HepG2 (cell line): ENCODE measurements at regions of chr6 and their contacts with region 1.

Region 1: GRCh38 chr6:110179401-110180227 is at the start of gene WASF1:
- DNase-seq: peak; percentile 96
- ATAC-seq: peak; percentile 85
- H3K4me3 ChIP-seq: peak within 1 kb of the TSS; percentile 83 to 95 (median 94)
- H3K27ac ChIP-seq: peak within 1 kb of the TSS; percentile 86
- H3K4me1 ChIP-seq: peaks cover 44% of the 10 kb centered on the region
- H3K27me3 ChIP-seq: peaks cover 0 to 3% of the 10 kb centered on the region in 2 experiments; a peak in 1 of 5 replicates
- CTCF ChIP-seq: 0 out of 2 replicates have a peak, but pooled peaks have one; percentile 21
- EP300 ChIP-seq: no peak
- POLR2A ChIP-seq: peak in 1 of 2 experiments; percentile 86; a peak in 2 of 4 replicates
- RAD21 ChIP-seq: 0 out of 2 replicates have a peak, but pooled peaks have one; percentile 8
- total RNA-seq, gene WASF1: 8.5 and 10.3 TPM in 2 replicates

Region 2: DNA sequence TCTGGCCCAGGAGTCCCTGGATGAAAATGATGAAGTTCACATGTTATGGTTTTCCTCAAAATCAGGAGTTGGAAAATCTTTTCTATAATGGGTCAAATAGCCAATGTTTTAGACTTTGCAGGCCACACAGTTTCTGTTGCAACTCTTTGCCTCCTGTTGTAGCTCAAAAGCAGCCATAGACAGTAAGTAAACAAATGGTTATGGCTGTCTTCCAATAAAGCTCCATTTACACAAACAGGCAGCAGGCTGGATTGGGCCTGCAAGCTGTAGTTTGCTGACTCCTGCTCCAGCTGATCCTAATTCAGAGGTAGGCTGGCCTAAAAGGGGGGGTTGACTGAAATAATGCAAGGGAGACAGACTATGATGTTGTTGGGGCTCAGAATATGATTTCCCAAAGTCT is 145.6 kb after region 1 on chr6:
- CTCF ChIA-PET with region 1: no interaction called
- POLR2A ChIA-PET with region 1: no interaction called
- in situ Hi-C with region 1: no loop called
- intact Hi-C with region 1: loop called (anchors 5 kb)
- DNase-seq: peak; percentile 46
- ATAC-seq: peak; percentile 34; the same call in 2 of the 3 replicates
- H3K4me3 ChIP-seq: no peak overlapping the region
- H3K27ac ChIP-seq: no peak overlapping the region
- H3K4me1 ChIP-seq: peaks cover 43% of the 10 kb centered on the region
- H3K27me3 ChIP-seq: peaks cover 0 to 18% of the 10 kb centered on the region in 2 experiments; a peak in 2 of 5 replicates
- CTCF ChIP-seq: no peak
- EP300 ChIP-seq: no peak
- POLR2A ChIP-seq: no peak
- RAD21 ChIP-seq: no peak

Region 3: DNA sequence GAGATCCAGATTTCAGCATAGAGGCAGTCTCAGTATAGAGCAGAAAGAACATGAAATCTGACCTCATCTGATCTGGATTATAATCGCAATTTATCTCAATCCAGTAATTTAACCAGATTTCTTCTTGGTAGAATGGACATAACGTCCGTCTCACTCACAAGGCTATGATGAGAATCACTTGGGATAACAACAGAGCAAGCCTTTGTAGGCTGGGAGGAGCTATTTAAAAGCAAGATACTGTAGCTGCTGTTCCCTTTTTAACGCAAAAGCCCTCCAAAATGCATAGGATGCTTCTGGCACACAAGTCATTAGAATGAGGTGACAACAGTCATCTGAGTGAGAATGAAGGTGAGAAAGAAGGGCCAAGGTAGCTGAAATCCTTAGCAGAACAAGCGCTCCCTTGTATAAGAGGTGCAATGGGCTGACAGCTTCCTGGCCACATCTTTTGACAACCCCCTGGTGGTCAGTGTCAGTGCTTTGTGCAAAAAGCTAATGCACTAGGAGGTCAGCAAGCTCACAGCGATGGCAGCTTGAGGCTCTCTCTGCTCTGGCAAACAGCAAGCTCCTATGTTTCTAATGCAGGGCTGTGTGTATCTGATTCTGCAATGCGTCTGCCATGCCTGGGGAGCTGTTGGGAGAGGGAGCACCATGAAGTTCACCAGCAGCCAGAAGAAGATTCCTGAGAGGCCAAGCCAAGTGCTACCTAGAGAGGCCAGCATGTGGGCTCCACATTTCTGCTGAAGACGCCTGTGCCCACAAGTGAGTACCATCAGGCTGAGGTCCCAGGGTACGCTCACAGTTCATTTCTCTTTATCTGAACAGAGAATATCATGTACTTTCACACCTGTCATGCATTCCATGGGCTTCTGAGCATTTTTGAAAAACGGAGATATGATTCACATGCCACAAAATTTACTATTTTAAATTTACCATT is 162.3 kb after region 1 on chr6:
- CTCF ChIA-PET with region 1: interaction called, 4 read pairs
- POLR2A ChIA-PET with region 1: no interaction called
- in situ Hi-C with region 1: no loop called
- intact Hi-C with region 1: loop called (anchors 5 kb)
- DNase-seq: peak; percentile 55
- ATAC-seq: peak; percentile 100
- H3K4me3 ChIP-seq: no peak overlapping the region
- H3K27ac ChIP-seq: no peak overlapping the region
- H3K4me1 ChIP-seq: no peaks in the 10 kb centered on the region
- H3K27me3 ChIP-seq: no peaks in the 10 kb centered on the region
- CTCF ChIP-seq: peak; percentile 82
- EP300 ChIP-seq: no peak
- POLR2A ChIP-seq: no peak
- RAD21 ChIP-seq: peak; percentile 60

Region 4: GRCh38 chr6:110389689-110390382 is 210.2 kb after region 1 on chr6:
- CTCF ChIA-PET with region 1: interaction called, 11 read pairs
- POLR2A ChIA-PET with region 1: interaction called, 3 read pairs
- in situ Hi-C with region 1: loop called (anchors 10 kb)
- intact Hi-C with region 1: loop called (anchors 1 kb)
- DNase-seq: no peak
- ATAC-seq: no peak
- H3K4me3 ChIP-seq: no peak overlapping the region
- H3K27ac ChIP-seq: no peak overlapping the region
- H3K4me1 ChIP-seq: peaks cover 46% of the 10 kb centered on the region
- H3K27me3 ChIP-seq: no peaks in the 10 kb centered on the region
- CTCF ChIP-seq: no peak
- EP300 ChIP-seq: no peak
- POLR2A ChIP-seq: no peak
- RAD21 ChIP-seq: no peak